HEK293T (cell line): ENCODE measurements at regions of chr11 and their contacts with region 1.

Region 1: DNA sequence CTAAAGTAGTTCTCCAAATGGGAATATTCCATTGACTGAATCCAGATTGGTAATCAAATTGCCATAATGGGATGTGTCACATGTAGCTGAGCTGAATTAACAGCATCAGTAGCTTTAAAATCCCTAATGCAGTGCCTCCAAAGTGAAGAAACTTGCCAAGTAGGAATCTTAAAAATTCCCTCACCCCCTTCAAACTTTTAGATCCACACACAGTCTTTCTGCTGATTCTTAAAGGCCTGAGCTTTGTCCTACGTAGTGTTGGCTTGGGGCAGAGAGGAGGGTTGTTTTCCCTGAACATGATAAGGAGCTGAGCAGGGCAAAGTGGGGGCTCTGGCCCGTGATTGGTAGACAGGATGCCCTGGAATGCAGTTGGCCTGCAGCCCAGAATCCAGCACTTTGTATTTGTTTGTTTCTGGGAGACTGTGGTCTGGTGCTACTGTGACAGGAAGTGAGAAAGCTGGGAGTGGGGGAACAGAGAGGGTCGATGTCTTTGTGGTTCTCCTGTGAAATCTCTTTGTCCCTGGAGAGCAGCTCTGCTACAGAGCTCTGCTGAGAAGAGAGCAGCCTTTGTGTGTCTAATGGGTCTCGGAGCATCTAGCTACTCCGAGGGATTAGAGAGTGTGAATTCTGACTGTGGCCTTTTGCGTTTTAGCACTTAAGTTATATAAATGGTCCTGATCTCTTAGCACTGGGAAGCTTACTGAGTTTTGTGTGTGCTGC is 16.9 kb downstream of the CTNND1 start:
- DNase-seq: peak; percentile 72

Region 2: DNA sequence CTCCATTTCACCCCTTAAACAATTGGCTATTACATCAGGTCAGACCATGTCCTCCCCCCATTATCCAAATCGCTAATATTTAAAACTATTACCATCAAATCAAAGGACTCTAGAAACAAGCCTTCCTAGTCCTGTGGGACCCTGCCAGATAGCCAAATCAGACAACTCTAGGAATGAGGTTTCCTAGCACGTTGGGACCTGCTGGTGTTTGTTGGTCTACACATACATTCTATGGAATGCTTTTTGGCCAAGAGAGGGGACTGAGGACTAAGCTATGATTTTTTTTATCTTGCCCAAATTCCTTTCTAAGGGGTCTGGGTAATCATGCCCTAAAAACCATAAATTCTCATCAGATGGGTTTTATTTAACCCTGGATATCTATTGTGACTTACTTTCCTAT is 51.3 kb before region 1 on chr11:
- CTCF ChIA-PET with region 1: no interaction called
- POLR2A ChIA-PET with region 1: no interaction called
- DNase-seq: no peak

Region 3: DNA sequence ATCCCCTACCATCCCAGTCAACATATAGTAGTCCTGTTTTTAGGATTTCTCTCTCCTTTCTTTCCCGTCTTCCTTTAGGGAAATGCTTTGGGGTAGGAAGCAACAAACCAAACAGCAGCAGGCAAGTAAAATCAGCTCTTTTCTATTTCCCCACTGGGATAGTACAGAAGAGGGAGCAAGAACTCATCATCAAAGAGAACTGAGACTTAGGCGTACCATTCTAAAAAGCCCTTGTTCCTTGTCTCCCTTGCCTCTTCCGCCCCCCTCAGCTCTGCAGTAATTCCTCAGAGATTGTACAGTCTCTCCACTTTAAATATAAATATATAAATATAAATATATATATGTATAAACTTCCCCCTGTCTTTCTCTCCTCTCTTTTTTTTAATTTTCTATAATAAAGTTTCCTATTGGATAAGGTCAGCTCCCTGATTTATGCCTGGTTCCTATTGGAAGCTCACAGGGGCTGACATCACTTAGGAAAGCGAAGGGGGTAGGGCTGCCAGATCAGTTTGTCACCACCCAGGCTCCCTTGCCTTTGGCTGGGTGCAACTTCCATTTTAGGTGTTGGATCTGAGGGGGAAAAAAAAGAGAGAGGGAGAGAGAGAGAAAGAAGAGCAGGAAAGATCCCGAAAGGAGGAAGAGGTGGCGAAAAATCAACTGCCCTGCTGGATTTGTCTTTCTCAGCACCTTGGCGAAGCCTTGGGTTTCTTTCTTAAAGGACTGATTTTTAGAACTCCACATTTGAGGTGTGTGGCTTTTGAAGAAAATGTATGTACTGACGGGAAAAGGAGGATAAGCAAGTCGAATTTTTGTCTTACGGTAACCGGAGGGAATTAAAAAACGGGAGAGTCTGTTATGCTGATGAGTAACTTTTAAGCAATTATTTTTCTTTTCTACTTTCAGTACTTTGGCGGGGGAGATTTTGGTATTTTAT is 16.9 kb before region 1 on chr11 and contains the start of gene CTNND1:
- CTCF ChIA-PET with region 1: interaction called, 7 read pairs
- POLR2A ChIA-PET with region 1: interaction called, 28 read pairs
- DNase-seq: peak; percentile 91